Caco-2 (cell line): ENCODE measurements at regions of chr22 and their contacts with region 1.

Region 1: DNA sequence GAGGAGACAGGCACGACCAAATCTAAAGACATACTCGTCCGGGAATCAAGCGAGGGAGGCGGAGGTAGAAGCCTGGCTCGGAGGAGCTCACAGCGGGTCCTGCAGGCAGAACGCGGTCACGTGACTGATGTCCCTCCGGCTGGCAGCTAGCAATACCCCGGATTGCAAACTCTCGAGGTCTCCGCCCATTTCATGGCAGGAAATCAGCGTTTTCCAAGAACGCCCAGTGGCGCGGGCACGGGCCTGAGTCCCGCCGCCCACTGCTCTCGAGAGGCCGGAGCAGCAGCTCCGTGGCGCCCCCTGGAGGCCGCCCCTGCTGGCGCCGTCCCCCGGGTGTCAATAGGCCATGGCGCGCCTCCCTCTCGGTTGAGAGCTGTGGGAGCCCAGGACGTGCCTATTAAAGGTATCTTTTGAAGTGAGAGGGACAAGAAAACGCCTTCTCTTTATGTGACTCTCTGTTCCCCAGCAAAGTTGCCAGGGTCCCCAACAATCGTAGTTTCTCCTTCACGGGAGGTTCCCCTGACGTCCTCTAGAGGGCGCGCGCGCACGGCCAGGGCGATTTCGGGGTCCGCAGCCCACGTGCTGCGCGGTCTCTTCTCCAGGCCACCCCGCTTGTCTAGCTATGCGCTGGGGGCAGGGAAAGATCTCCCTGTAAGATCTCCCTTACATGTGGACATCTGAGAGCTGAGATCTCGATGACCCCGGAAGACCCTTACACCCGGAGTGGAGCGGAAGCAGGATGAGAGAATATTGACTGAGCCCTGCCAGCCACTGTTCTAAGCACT is 37.3 kb upstream of the RBFOX2 start:
- DNase-seq: peak; percentile 90
- H3K4me3 ChIP-seq: peak overlapping the region; percentile 46
- H3K4me3 Mint-ChIP-seq: peak overlapping the region; percentile 79
- H3K27ac Mint-ChIP-seq: peak overlapping the region; percentile 93
- H3K4me1 ChIP-seq: no peaks in the 10 kb centered on the region
- H3K4me1 Mint-ChIP-seq: no peaks in the 10 kb centered on the region
- H3K27me3 ChIP-seq: no peaks in the 10 kb centered on the region
- H3K27me3 Mint-ChIP-seq: no peaks in the 10 kb centered on the region
- CTCF ChIP-seq: peak; percentile 85 to 99

Region 2: DNA sequence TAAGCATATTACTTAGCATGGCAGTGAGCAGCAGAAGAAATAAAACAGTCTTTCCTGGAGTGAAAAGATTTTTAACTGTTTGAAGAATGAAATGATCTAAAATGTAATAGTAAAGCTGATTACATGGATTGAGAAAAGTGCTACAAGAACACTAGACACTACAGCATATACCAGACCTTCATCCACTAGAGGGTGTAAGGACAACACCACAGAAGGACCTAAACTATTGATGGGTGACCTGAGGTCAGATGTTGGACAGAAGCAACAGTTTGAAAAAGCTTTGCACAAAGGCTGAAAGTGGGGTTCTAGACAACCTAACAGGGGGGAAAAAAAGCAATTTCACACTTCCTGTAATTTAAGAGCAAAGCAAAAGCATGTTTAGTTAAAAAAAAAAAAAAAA is 135.0 kb before region 1 on chr22:
- CTCF ChIA-PET with region 1: interaction called, 21 read pairs
- POLR2A ChIA-PET with region 1: no interaction called
- intact Hi-C with region 1: loop called (anchors 1 kb)
- DNase-seq: peak in 1 of 2 experiments; percentile 58
- H3K4me3 ChIP-seq: no peak overlapping the region
- H3K4me3 Mint-ChIP-seq: no peak overlapping the region
- H3K27ac Mint-ChIP-seq: peak overlapping the region; percentile 27
- H3K4me1 ChIP-seq: no peaks in the 10 kb centered on the region
- H3K4me1 Mint-ChIP-seq: peaks cover 6% of the 10 kb centered on the region
- H3K27me3 ChIP-seq: no peaks in the 10 kb centered on the region
- H3K27me3 Mint-ChIP-seq: no peaks in the 10 kb centered on the region
- CTCF ChIP-seq: peak; percentile 30 to 71

Region 3: DNA sequence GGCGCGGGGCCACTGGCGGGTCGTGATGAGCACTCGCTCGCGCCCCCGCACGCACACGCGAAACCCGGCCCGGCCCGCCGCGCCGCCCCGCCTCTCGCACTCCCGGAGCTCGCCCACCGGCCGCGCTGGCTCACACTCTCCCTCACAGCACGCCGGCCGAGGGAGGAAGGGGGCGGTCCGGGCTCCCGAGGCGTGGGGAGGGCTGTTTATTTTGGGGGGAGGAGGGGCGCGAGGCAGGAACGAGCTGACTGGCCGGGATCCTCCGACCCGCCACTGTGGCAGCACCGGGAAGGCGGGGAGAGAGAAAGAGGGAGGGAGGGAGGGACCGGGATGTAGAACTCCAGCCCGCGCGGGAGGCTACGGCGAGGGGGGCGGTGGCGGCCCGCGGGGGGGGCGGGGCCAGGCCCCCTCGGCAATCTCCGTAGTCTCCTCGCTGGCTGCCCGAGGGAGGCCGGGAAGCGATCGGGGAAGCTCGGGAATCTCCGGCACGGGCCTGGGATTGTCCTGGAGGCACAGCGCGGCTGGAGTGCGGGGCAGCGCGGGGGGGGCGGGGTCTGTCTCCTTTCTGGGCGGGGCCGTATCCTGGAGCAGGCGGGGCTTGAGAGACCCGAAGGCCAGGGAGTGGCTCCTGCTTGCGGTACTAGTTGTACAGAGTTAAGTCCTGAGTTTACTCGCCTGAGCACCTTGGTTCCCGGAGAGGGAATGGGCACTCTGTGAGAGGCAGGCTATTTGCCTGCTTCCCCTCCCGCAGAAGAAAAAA is 37.1 kb before region 1 on chr22 and contains the start of gene RBFOX2:
- CTCF ChIA-PET with region 1: interaction called, 55 read pairs
- POLR2A ChIA-PET with region 1: interaction called, 16 read pairs
- intact Hi-C with region 1: loop called (anchors 2 kb)
- DNase-seq: peak; percentile 96 to 98
- H3K4me3 ChIP-seq: peak within 1 kb of the TSS; percentile 93
- H3K4me3 Mint-ChIP-seq: peak within 1 kb of the TSS; percentile 88
- H3K27ac Mint-ChIP-seq: peak within 1 kb of the TSS; percentile 81
- H3K4me1 ChIP-seq: peaks cover 11% of the 10 kb centered on the region; the same call in 1 of the 2 replicates
- H3K4me1 Mint-ChIP-seq: peaks cover 25% of the 10 kb centered on the region
- H3K27me3 ChIP-seq: no peaks in the 10 kb centered on the region
- H3K27me3 Mint-ChIP-seq: no peaks in the 10 kb centered on the region
- CTCF ChIP-seq: no peak
- total RNA-seq, gene RBFOX2: 91.1 and 96.5 TPM in 2 replicates

Region 4: GRCh38 chr22:36052505-36053270 is 13.3 kb before region 1 on chr22:
- CTCF ChIA-PET with region 1: interaction called, 18 read pairs
- POLR2A ChIA-PET with region 1: no interaction called
- intact Hi-C with region 1: no loop called
- DNase-seq: peak; percentile 65 to 75
- H3K4me3 ChIP-seq: no peak overlapping the region
- H3K4me3 Mint-ChIP-seq: peak overlapping the region; percentile 14
- H3K27ac Mint-ChIP-seq: peak overlapping the region; percentile 91
- H3K4me1 ChIP-seq: peaks cover 15% of the 10 kb centered on the region
- H3K4me1 Mint-ChIP-seq: peaks cover 10% of the 10 kb centered on the region
- H3K27me3 ChIP-seq: no peaks in the 10 kb centered on the region
- H3K27me3 Mint-ChIP-seq: no peaks in the 10 kb centered on the region
- CTCF ChIP-seq: no peak

Region 5: GRCh38 chr22:36077271-36077670 is 11.3 kb after region 1 on chr22:
- CTCF ChIA-PET with region 1: interaction called, 11 read pairs
- POLR2A ChIA-PET with region 1: no interaction called
- intact Hi-C with region 1: no loop called
- DNase-seq: no peak
- H3K4me3 ChIP-seq: no peak overlapping the region
- H3K4me3 Mint-ChIP-seq: no peak overlapping the region
- H3K27ac Mint-ChIP-seq: no peak overlapping the region
- H3K4me1 ChIP-seq: no peaks in the 10 kb centered on the region
- H3K4me1 Mint-ChIP-seq: no peaks in the 10 kb centered on the region
- H3K27me3 ChIP-seq: no peaks in the 10 kb centered on the region
- H3K27me3 Mint-ChIP-seq: no peaks in the 10 kb centered on the region
- CTCF ChIP-seq: no peak

Region 6: DNA sequence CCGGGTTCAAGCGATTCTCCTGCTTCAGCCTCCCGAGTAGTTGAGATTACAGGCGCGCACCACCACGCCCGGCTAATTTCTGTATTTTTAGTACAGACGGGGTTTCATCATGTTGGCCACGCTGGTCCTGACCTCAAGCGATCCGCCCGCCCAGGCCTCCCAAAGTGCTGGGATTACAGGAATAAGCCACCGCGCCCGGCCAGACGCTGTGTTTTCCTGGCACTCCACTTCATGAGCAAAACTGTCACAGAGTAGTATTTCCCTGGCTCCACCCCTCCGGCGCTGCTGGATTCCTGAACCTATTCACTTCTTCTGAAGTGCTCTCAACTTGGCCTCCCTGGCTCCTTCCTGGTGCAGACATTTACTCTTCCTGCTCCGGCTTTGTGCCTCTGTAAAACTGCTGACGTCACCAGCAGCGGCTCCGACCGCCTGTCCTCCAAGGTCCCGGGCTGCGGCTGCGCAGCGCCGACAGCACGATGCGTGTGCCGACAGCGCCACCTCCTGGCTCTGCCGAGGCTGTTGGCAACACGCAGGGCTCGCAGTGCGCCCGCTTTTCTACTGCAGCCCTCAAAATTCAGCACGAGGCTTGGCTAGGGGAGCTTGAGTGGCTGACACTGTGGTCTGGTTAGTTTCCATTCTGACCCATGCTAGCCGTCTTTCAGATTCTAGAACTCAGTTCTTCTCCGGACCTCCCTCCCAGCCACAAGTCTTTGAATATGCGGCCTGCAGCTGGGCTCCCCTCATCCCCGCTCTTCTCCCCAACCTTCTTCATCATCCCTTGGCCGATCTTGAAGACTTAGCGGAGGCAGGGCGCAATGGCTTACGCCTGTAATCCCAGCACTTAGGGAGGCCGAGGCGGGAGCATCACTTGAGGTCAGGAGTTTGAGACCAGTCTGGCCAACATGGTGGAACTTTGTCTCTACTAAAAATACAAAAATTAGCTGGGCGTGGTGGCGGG is 58.0 kb after region 1 on chr22:
- CTCF ChIA-PET with region 1: interaction called, 10 read pairs
- POLR2A ChIA-PET with region 1: no interaction called
- intact Hi-C with region 1: loop called (anchors 1 kb)
- DNase-seq: peak; percentile 92 to 94
- H3K4me3 ChIP-seq: peak overlapping the region; percentile 25
- H3K4me3 Mint-ChIP-seq: peak overlapping the region; percentile 63
- H3K27ac Mint-ChIP-seq: peak overlapping the region; percentile 85
- H3K4me1 ChIP-seq: 0 out of 2 replicates have a peak, but pooled peaks cover 3% of the 10 kb centered on the region
- H3K4me1 Mint-ChIP-seq: peaks cover 7% of the 10 kb centered on the region
- H3K27me3 ChIP-seq: no peaks in the 10 kb centered on the region
- H3K27me3 Mint-ChIP-seq: peaks cover 9% of the 10 kb centered on the region
- CTCF ChIP-seq: peak; percentile 92 to 97